Heart right ventricle (tissue), 16 donors: ENCODE measurements at regions of chr17 and their contacts with region 1.

Region 1: GRCh38 chr17:61389670-61390478 is 9.8 kb upstream of the TBX2 start:
- DNase-seq: peak in 1 of 2 donors; percentile 68
- ATAC-seq: peak; percentile 57 to 81 (median 73)
- H3K4me3 ChIP-seq: peak overlapping the region in 2 of 10 donors; percentile 1 to 20
- H3K27ac ChIP-seq: peak overlapping the region in 9 of 10 donors; percentile 19 to 72 (median 60)
- H3K4me1 ChIP-seq: peaks cover 0 to 24% (median 8%) of the 10 kb centered on the region in 9 donors
- H3K27me3 ChIP-seq: peaks cover 0 to 12% (median 0%) of the 10 kb centered on the region in 7 donors
- CTCF ChIP-seq: peak; percentile 66 to 92 (median 90)

Region 2: DNA sequence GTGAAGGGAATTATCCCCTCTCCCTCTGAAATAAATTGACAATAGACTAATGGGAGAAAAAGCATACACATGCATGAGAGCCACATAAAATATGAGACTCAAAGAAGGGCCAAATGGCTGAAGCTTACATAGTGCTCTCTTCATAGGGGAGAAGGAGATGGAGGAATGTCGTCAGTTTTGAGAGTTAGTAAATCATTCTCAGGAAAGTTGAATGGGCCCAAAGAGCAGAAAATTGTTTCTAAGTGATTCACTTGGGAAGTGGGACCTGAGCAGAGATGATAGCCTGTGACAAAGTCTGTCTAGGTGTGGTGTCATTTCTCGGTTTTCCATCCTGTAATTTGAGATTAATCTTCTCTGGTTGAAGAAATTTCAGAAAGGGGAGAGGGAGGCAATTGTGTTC is 677.2 kb before region 1 on chr17:
- intact Hi-C with region 1: loop called in 1 of 10 experiments (anchors 10 kb)
- DNase-seq: no peak
- ATAC-seq: no peak
- H3K4me3 ChIP-seq: no peak overlapping the region
- H3K27ac ChIP-seq: no peak overlapping the region
- H3K4me1 ChIP-seq: no peaks in the 10 kb centered on the region
- H3K27me3 ChIP-seq: no peaks in the 10 kb centered on the region
- CTCF ChIP-seq: no peak

Region 3: GRCh38 chr17:61139219-61139618 is 250.7 kb before region 1 on chr17:
- intact Hi-C with region 1: loop called in 1 of 10 experiments (anchors 5 kb)
- DNase-seq: no peak
- ATAC-seq: peak in 5 of 8 donors; percentile 34 to 66 (median 44)
- H3K4me3 ChIP-seq: no peak overlapping the region
- H3K27ac ChIP-seq: peak overlapping the region in 1 of 10 donors; percentile 49
- H3K4me1 ChIP-seq: peaks cover 0 to 27% (median 7%) of the 10 kb centered on the region in 9 donors
- H3K27me3 ChIP-seq: no peaks in the 10 kb centered on the region
- CTCF ChIP-seq: no peak